Posterior cingulate gyrus (tissue), 11 donors: ENCODE measurements at regions of chr4 and their contacts with region 1.

Region 1: DNA sequence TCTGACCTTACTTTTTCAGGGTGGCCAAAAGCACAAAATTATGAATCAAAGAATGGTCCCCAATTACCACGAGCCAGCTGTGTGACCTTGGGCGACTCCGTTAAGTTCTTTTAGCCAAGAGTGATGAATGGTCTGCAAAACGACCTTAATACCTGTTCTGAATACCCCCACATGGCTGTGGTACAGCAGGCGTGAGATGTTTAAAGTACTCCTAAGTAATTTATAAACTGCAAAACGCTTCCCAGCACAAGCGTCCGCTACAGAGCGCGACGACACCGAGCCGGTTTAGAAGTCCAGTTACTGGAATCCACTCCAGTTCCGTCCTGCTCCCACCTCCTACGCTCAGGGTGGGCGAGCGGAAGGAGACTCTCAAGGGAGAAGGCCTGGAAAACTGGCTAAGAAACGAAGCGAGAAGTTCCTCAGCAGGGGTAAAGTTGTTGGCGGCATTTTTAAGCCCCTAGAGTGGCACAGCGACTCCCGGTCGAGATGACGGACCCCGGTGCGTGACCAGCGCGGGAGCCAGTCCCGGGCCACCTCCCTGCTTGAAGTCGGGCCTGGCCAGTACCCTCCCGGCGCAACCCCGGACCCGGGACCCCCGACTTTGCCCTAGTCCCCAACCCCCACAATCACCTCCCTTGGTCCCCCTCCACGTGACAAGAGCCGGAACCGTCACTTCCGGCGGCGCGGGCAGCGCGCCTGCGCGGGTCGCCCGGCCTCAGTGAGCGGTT is 683 bp upstream of the BMP2K start:
- DNase-seq: peak; percentile 80 to 98 (median 85)

Region 2: GRCh38 chr4:77618383-77619122 is 1156.9 kb before region 1 on chr4:
- intact Hi-C with region 1: no loop called
- DNase-seq: peak in 8 of 10 donors; percentile 19 to 90 (median 58)

Region 3: GRCh38 chr4:78612398-78613178 is 162.9 kb before region 1 on chr4:
- intact Hi-C with region 1: loop called (anchors 5 kb)
- DNase-seq: peak in 2 of 10 donors; percentile 19 to 57

Region 4: GRCh38 chr4:78644744-78645330 is 130.6 kb before region 1 on chr4:
- intact Hi-C with region 1: loop called (anchors 5 kb)
- DNase-seq: peak in 6 of 10 donors; percentile 30 to 80 (median 50)

Region 5: GRCh38 chr4:78704981-78705683 is 70.3 kb before region 1 on chr4:
- intact Hi-C with region 1: loop called (anchors 5 kb)
- DNase-seq: no peak